Psoas muscle (tissue), 8 donors: ENCODE measurements at regions of chr14 and their contacts with region 1.

Region 1: GRCh38 chr14:58107947-58108552 is 44.0 kb downstream of the ARMH4 start:
- DNase-seq: no peak
- ATAC-seq: peak in 3 of 4 donors; percentile 45 to 67 (median 51)
- H3K4me3 ChIP-seq: no peak overlapping the region
- H3K27ac ChIP-seq: no peak overlapping the region
- H3K4me1 ChIP-seq: no peaks in the 10 kb centered on the region
- H3K27me3 ChIP-seq: no peaks in the 10 kb centered on the region
- CTCF ChIP-seq: peak; percentile 80

Region 2: DNA sequence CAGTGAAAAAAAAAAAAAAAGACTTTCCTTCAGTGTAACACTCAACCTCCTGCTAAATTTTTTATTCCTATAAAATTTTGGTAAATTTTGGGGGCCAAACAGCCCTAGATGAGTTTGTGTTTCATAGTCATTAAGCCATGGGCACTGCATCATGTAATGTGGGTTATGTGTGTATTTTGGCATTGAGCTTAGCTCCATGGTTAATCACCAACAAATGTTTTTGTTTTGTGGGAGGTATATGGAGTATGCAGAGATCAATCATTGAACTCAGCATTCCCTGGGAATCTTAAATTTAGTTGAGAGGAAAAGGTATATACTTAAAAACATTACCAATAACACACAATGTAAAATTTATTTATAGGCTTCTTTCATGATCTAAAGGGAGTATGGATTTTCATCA is 52.5 kb after region 1 on chr14:
- intact Hi-C with region 1: loop called in 1 of 2 experiments (anchors 5 kb)
- DNase-seq: no peak
- ATAC-seq: no peak
- H3K4me3 ChIP-seq: no peak overlapping the region
- H3K27ac ChIP-seq: no peak overlapping the region
- H3K4me1 ChIP-seq: no peaks in the 10 kb centered on the region
- H3K27me3 ChIP-seq: no peaks in the 10 kb centered on the region
- CTCF ChIP-seq: no peak

Region 3: DNA sequence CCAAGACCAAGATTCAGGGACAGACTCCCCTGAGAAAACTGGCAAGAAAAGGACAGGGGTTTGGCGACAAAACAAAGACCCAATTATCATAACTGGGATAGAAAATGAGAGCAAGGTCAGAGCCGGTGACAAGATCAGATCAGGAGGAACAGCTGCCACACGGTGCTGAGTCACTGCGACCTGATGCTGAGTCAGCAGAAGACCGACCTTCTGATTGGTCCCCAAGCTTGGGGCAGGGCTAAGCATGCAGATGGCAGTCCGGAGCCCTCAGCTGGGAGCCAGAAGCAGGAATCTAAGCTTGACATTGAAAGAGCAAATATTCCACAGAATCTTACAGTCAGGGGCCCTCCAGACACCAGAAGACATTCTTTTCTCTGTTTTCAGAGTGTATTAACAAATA is 63.0 kb after region 1 on chr14:
- intact Hi-C with region 1: loop called in 1 of 2 experiments (anchors 2 kb)
- DNase-seq: peak; percentile 71 to 74
- ATAC-seq: peak; percentile 88 to 99 (median 96)
- H3K4me3 ChIP-seq: peak overlapping the region; percentile 28
- H3K27ac ChIP-seq: no peak overlapping the region
- H3K4me1 ChIP-seq: no peaks in the 10 kb centered on the region
- H3K27me3 ChIP-seq: no peaks in the 10 kb centered on the region
- CTCF ChIP-seq: no peak

Region 4: DNA sequence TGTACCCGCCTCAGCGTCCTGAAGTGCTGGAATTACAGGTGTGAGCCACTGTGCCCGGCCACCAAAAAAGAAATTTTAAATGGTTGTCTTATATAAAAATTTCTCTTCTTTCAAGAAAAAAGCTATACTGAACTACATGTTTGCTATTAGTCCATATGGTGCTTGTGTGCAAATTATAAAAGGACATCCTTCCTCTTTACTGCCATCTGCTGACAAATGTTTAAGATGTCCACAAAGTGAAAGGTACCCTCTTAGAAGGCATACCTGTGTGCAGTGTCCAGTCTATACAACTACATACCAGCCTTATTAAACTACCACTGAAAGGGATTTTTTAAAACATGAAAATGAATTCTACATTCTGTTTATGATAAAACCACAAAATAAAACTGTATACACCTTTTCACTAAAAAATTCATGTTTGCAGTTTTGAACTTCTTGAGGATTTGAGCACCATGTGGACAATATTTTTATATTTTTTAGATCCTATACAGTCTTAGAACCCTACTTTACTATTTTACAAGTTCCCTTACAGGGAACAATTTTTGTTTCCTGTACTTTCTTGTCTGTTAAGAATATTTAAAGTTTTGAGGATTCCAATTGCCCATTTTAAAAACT is 254.9 kb after region 1 on chr14:
- intact Hi-C with region 1: loop called (anchors 10 kb)
- DNase-seq: no peak
- ATAC-seq: peak in 1 of 4 donors; percentile 46
- H3K4me3 ChIP-seq: no peak overlapping the region
- H3K27ac ChIP-seq: no peak overlapping the region
- H3K4me1 ChIP-seq: no peaks in the 10 kb centered on the region
- H3K27me3 ChIP-seq: no peaks in the 10 kb centered on the region
- CTCF ChIP-seq: peak; percentile 36